ENCODE measurements at regions of chr3 and their contacts with region 1.

Region 1: DNA sequence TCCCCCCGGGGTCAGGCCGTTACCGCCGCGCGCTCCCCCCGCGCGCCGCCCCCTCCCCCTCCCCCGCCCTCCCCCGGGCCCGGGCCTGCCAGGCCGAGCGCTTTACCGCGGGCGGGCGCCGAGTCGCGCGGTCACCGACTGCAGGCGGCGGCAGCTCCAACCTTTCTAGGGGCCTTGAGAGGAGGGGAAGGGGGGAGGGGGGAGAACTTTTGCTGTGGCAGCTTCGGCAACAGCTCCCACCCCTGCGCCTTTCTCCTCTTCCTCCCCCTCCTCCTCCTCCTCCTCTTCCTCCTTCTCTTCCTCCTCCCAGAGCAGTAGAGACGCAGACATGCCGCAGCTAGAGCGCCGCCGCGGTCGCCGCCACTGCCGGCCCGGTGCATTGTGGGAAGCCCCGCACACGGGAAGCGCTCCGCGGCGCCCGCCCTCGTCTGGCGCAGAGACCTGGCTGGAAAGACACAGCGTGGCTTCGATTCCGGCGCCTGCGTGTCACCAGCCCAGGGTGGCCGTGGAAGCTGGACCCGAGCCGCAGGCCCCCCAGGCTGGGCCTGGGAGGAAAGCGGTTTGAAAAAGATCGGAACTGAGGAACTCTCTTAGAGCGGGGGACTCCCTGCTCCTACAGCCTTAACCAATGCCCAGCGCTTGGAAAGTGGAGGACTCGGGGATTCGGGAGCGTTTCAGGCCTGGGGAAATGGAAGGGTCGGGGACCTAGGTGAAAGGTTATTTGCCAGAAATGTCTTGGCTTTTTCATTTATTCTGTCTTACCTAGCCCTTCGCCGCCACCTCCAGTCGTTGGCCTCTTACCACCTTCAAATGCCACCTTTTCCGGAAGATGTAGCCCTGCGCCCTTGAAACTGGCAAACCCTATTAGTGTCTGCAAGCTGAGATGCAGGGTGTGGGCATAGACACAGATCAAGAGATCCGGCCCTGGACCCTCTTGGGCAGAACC is at the start of gene ZNF148:
- DNase-seq: peak; percentile 85 to 95 (median 91)
- ATAC-seq: peak; percentile 91
- H3K4me3 ChIP-seq: peak within 1 kb of the TSS; percentile 71 to 89
- H3K4me3 Mint-ChIP-seq: peak within 1 kb of the TSS; percentile 94
- H3K27ac ChIP-seq: peak within 1 kb of the TSS; percentile 94 to 95
- H3K27ac Mint-ChIP-seq: peak within 1 kb of the TSS; percentile 98
- H3K4me1 ChIP-seq: peaks cover 29% of the 10 kb centered on the region
- H3K4me1 Mint-ChIP-seq: peaks cover 41% of the 10 kb centered on the region
- H3K27me3 ChIP-seq: no peaks in the 10 kb centered on the region
- H3K27me3 Mint-ChIP-seq: no peaks in the 10 kb centered on the region
- CTCF ChIP-seq: no peak
- total RNA-seq, gene ZNF148: 32.2 to 35.9 TPM

Region 2: GRCh38 chr3:124995460-124995994 is 379.7 kb before region 1 on chr3:
- CTCF ChIA-PET with region 1: no interaction called
- POLR2A ChIA-PET with region 1: no interaction called
- intact Hi-C with region 1: loop called (anchors 5 kb)
- DNase-seq: peak in 8 of 9 experiments; percentile 6 to 80 (median 52)
- ATAC-seq: peak; percentile 92
- H3K4me3 ChIP-seq: no peak overlapping the region
- H3K4me3 Mint-ChIP-seq: no peak overlapping the region
- H3K27ac ChIP-seq: peak overlapping the region in 1 of 2 experiments; percentile 38
- H3K27ac Mint-ChIP-seq: no peak overlapping the region
- H3K4me1 ChIP-seq: no peaks in the 10 kb centered on the region
- H3K4me1 Mint-ChIP-seq: peaks cover 4% of the 10 kb centered on the region
- H3K27me3 ChIP-seq: no peaks in the 10 kb centered on the region
- H3K27me3 Mint-ChIP-seq: no peaks in the 10 kb centered on the region
- CTCF ChIP-seq: peak; percentile 72

Region 3: DNA sequence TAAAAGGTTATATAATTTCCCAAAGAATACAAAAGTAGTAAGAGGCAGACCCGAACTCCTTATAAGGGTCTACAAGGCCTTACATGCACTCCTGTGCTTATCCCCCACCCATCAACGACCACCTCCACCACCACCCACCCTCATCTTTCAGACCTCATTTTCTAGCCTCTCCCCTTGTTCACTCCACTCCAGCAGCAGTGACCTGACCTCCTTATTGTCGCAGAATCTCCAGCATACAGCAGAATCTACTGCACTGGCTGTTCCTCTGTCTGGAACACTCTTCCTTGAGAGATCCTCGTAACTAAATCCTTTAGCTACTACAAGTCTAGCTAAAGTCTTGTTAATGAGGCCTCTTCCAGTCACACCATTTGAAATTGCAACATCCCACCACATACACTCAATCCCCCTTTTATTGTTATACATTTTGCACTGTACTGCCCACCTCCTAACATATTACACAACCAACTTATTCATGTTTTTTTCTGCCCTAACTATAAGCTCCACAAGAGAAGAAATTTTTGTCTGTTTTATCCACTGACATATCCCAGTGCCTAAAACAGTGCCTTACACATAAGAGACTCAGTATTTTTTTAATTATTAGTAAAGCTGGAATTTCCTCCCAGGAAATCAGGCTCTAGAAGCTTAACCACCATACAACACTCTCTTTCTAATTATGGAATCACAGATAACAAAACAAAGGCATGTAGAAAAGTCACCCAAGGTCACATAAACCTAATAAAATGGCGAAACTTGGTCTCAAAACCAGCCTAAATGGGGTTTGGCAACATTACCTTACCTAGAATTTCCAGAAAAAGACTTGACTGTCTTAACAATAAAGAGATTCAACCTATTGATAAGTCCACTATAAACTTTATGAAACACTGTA is 40.4 kb before region 1 on chr3:
- CTCF ChIA-PET with region 1: no interaction called
- POLR2A ChIA-PET with region 1: no interaction called
- intact Hi-C with region 1: no loop called
- DNase-seq: no peak
- ATAC-seq: no peak
- H3K4me3 ChIP-seq: no peak overlapping the region
- H3K4me3 Mint-ChIP-seq: no peak overlapping the region
- H3K27ac ChIP-seq: no peak overlapping the region
- H3K27ac Mint-ChIP-seq: peak overlapping the region; percentile 56
- H3K4me1 ChIP-seq: peaks cover 3% of the 10 kb centered on the region
- H3K4me1 Mint-ChIP-seq: peaks cover 62% of the 10 kb centered on the region
- H3K27me3 ChIP-seq: no peaks in the 10 kb centered on the region
- H3K27me3 Mint-ChIP-seq: no peaks in the 10 kb centered on the region
- CTCF ChIP-seq: no peak

Region 4: GRCh38 chr3:125357032-125357658 is 18.1 kb before region 1 on chr3:
- CTCF ChIA-PET with region 1: no interaction called
- POLR2A ChIA-PET with region 1: interaction called, 16 read pairs
- intact Hi-C with region 1: loop called (anchors 1 kb)
- DNase-seq: peak in 8 of 9 experiments; percentile 35 to 82 (median 66)
- ATAC-seq: peak; percentile 97
- H3K4me3 ChIP-seq: peak overlapping the region; percentile 58 to 60
- H3K4me3 Mint-ChIP-seq: peak overlapping the region; percentile 92
- H3K27ac ChIP-seq: peak overlapping the region; percentile 55 to 64
- H3K27ac Mint-ChIP-seq: peak overlapping the region; percentile 97
- H3K4me1 ChIP-seq: peaks cover 24% of the 10 kb centered on the region
- H3K4me1 Mint-ChIP-seq: peaks cover 75% of the 10 kb centered on the region
- H3K27me3 ChIP-seq: no peaks in the 10 kb centered on the region
- H3K27me3 Mint-ChIP-seq: no peaks in the 10 kb centered on the region
- CTCF ChIP-seq: no peak

Region 5: DNA sequence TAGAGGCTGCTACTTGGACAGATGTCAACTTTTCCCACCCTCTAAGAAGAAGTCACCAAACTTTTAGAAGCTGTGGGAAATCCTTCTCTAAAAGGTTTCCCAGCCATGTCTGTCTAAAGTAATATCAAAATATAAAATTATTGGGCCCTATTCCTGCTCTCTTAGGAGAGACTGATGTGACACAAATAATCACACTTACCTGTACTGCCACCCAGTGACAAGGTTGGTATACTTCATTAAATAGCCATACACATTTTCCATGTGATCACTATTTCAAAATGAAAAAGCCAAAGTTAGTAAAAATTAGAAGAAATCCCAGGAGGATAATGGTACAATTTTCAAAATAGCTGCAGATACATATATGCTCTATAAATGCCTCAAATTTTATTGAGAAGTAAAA is 207.4 kb after region 1 on chr3:
- CTCF ChIA-PET with region 1: no interaction called
- POLR2A ChIA-PET with region 1: no interaction called
- intact Hi-C with region 1: no loop called
- DNase-seq: no peak
- ATAC-seq: no peak
- H3K4me3 ChIP-seq: no peak overlapping the region
- H3K4me3 Mint-ChIP-seq: no peak overlapping the region
- H3K27ac ChIP-seq: no peak overlapping the region
- H3K27ac Mint-ChIP-seq: no peak overlapping the region
- H3K4me1 ChIP-seq: peaks cover 5% of the 10 kb centered on the region
- H3K4me1 Mint-ChIP-seq: peaks cover 10% of the 10 kb centered on the region
- H3K27me3 ChIP-seq: no peaks in the 10 kb centered on the region
- H3K27me3 Mint-ChIP-seq: no peaks in the 10 kb centered on the region
- CTCF ChIP-seq: no peak

Region 6: DNA sequence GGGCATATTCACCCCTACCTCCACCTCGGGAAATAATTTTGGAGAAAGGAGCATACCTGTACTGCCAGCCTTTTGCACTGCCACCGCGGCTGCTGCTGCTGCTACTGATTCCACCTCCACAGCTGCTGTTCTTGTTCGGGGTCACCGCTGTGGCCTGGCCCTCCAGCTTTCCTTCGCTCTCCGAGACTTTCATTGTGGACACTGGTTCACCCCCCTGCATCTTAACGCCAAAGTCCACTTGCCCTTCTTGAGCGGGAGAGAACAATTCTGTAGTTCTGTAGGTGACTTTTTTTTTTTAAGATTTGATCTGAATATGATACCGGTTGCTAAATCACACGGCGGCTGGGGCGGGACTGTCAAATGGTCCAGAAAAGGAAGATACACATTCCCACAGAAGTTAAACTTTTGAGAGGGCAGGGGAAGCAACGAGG is 219.3 kb after region 1 on chr3:
- CTCF ChIA-PET with region 1: no interaction called
- POLR2A ChIA-PET with region 1: no interaction called
- intact Hi-C with region 1: loop called (anchors 1 to 2 kb)
- DNase-seq: peak in 2 of 9 experiments; percentile 6 to 17
- ATAC-seq: no peak
- H3K4me3 ChIP-seq: peak overlapping the region; percentile 85 to 91
- H3K4me3 Mint-ChIP-seq: peak overlapping the region; percentile 92
- H3K27ac ChIP-seq: peak overlapping the region; percentile 68 to 87
- H3K27ac Mint-ChIP-seq: peak overlapping the region; percentile 77
- H3K4me1 ChIP-seq: peaks cover 16% of the 10 kb centered on the region
- H3K4me1 Mint-ChIP-seq: peaks cover 44% of the 10 kb centered on the region
- H3K27me3 ChIP-seq: no peaks in the 10 kb centered on the region
- H3K27me3 Mint-ChIP-seq: no peaks in the 10 kb centered on the region
- CTCF ChIP-seq: no peak

Measured in CD8-positive, alpha-beta T cell (primary cell).